PC-9 (cell line): ENCODE measurements at regions of chr3 and their contacts with region 1.

Region 1: DNA sequence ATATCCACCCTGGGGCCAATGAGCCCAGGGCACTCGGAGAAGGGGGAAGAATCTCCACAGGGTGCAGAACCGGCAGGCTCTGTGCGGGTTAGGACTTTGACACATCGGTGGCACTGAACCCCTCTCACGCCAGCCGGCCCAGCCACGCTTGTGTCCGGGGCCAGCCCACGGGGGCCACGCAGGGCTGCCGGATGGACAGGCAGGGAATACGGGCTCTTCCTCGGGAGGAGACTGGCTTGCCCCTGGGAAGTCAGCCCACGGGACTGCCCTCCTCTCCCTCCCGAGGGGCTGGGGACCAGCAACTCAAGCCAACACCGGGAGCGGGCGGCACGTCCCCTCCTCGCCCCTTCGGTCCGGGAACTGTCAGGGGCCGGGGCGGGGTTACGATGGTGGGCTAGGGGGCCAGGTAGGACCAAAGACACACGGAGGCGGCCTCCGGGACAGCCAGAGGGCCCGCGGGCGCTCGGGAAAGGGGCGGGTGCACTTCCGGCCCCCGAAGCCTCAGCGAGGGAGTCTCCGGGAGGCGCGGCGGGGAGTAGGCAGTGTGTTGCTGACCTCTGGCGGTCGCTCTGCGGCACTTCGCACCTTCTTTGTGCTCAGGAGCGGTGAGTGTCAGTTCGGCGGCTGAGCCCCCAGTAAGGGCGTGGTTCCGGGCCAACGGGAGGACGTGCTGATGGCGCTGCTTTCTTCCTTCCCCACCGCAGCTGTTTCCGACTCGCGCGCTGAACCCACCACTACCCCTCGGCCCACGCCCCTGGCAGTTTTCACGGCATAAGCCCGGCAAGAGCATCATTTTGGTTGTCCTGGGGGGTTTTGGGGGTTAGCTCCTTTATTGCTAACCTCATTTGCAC is 5.1 kb upstream of the CYP8B1 start:
- DNase-seq: peak; percentile 47 to 69
- H3K4me3 ChIP-seq: peak overlapping the region; percentile 32; the same call in 1 of the 2 replicates
- H3K27ac ChIP-seq: no peak overlapping the region
- H3K4me1 ChIP-seq: peaks cover 4% of the 10 kb centered on the region; the same call in 1 of the 2 replicates
- H3K27me3 ChIP-seq: no peaks in the 10 kb centered on the region
- CTCF ChIP-seq: peak; percentile 75

Region 2: GRCh38 chr3:42229942-42230688 is 650.7 kb before region 1 on chr3:
- CTCF ChIA-PET with region 1: no interaction called
- POLR2A ChIA-PET with region 1: no interaction called
- intact Hi-C with region 1: loop called (anchors 5 kb)
- DNase-seq: peak; percentile 30 to 42
- H3K4me3 ChIP-seq: no peak overlapping the region
- H3K27ac ChIP-seq: no peak overlapping the region
- H3K4me1 ChIP-seq: no peaks in the 10 kb centered on the region
- H3K27me3 ChIP-seq: no peaks in the 10 kb centered on the region
- CTCF ChIP-seq: peak; percentile 71

Region 3: GRCh38 chr3:42780892-42781700 is 99.7 kb before region 1 on chr3:
- CTCF ChIA-PET with region 1: no interaction called
- POLR2A ChIA-PET with region 1: no interaction called
- intact Hi-C with region 1: loop called (anchors 1 kb)
- DNase-seq: peak in 1 of 2 experiments; percentile 55
- H3K4me3 ChIP-seq: no peak overlapping the region
- H3K27ac ChIP-seq: no peak overlapping the region
- H3K4me1 ChIP-seq: no peaks in the 10 kb centered on the region
- H3K27me3 ChIP-seq: no peaks in the 10 kb centered on the region
- CTCF ChIP-seq: peak; percentile 86

Region 4: DNA sequence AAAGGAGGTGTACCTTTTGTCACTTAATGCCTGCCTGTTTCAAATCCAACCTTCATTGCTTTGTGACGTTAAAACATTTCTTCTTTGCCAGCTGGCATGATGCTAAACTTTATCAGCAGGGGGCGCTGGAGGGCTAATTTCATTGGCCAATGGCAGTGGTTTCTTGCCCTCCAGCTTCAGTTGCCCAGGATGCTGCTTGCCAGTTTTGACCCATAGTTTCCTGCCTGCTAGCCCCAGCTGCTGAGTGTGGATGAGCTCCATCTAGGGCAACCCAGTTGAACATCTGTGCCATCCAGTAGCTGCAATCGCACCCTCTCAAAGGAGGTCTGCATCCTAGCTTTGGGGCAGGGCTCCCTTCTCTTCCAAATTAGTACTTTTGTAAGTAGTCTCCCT is 49.5 kb before region 1 on chr3:
- CTCF ChIA-PET with region 1: interaction called, 3 read pairs
- POLR2A ChIA-PET with region 1: no interaction called
- intact Hi-C with region 1: loop called (anchors 5 kb)
- DNase-seq: peak in 1 of 2 experiments; percentile 46
- H3K4me3 ChIP-seq: no peak overlapping the region
- H3K27ac ChIP-seq: no peak overlapping the region
- H3K4me1 ChIP-seq: peaks cover 58% of the 10 kb centered on the region
- H3K27me3 ChIP-seq: no peaks in the 10 kb centered on the region
- CTCF ChIP-seq: peak; percentile 74

Region 5: DNA sequence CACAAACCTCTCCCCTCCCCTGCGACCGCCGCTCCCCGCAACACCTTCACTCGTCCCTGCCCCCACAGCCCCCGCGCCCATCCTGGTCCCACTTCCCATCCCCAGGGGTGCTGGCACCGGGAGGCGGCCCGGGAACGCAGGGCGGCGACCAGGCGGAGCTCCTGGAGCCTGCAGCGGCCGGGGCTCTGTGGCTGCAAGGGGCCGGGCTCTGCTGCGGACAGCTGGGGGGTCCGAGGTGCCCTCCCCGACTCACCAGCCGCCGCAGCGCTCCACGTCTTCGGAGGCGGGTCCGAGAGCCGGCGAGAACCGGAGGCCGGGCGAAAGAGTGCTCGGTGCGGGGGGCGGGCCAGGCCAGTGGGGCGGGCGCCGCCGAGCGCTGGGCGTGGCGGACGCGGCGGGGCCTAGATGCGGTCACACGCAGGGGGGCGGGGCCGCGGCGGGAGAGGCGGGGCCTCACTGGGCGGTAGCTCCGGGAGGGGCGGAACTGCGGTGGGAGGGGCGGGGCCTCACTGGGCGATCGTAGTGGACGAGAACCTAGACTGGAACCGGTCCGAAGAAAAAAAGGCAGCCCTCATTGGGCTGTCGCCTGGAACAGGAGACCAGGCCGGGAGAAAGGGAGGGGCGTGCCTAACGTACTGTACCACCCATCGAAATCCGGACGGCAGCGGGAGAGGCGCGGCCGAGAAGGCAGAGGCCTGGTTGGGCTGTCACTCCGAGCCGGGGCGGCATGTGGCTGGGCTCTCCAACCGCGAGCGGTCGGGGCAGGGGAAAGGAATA is 741.0 kb after region 1 on chr3 and contains the start of gene ANO10:
- CTCF ChIA-PET with region 1: interaction called, 10 read pairs
- POLR2A ChIA-PET with region 1: no interaction called
- intact Hi-C with region 1: no loop called
- DNase-seq: peak; percentile 96 to 98
- H3K4me3 ChIP-seq: peak within 1 kb of the TSS; percentile 87
- H3K27ac ChIP-seq: peak within 1 kb of the TSS; percentile 73
- H3K4me1 ChIP-seq: peaks cover 10% of the 10 kb centered on the region
- H3K27me3 ChIP-seq: no peaks in the 10 kb centered on the region
- CTCF ChIP-seq: no peak
- total RNA-seq, gene ANO10: 30.7 and 32.6 TPM in 2 replicates